ENCODE measurements at regions of chr19 and their contacts with region 1.

Region 1: DNA sequence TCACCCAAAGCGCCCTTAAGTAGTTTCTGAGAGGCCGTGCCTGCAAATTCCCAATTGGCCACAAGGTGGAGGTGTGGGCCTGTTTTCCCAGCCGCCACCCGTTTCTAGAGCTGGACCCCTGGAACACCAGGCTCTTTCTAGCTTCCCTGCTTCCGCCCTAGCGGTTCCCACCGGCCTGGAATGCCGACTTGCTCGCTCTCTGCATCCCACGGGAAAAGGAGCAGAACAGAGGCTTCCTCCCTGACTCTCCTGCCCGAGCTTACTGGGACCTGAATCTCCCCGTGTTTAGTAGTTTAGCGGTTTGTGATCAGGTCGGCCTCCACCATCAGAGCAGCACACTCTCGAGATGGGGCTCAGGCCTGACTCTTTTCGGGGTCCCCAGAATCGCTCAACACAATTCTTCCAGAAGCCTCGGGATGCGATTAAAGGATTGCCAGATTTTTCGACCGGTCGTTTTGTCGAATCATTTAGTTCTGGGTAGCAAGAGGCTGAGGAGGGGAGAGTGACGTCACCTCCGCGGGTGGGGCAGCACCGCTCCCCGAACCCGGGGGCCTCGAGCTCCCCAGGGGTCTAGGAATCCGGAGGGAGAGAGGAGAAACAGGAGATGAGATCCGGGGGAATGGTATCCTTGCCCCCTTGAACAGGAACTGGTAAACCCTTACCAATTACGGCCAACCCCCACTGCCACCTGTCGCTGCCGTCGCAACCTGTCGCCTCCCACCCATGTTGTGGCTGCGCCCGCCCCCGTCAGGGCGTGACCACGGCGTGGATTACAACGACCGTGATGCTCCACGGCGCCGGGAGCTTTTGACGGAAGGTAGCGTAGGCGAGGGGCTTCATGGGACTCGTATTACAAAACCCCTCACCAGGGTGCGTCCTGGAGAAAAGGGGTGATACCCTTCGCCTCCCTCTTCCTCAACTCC is 8.0 kb downstream of the NAPSA start:
- DNase-seq: peak; percentile 91
- H3K4me3 Mint-ChIP-seq: peak overlapping the region; percentile 82
- H3K27ac Mint-ChIP-seq: peak overlapping the region; percentile 92
- H3K4me1 Mint-ChIP-seq: peaks cover 45% of the 10 kb centered on the region
- H3K27me3 Mint-ChIP-seq: no peaks in the 10 kb centered on the region

Region 2: GRCh38 chr19:50203281-50204080 is 154.0 kb before region 1 on chr19 and contains the start of gene MYH14:
- CTCF ChIA-PET with region 1: no interaction called
- intact Hi-C with region 1: no loop called
- DNase-seq: no peak
- H3K4me3 Mint-ChIP-seq: no peak within 1 kb of the TSS
- H3K27ac Mint-ChIP-seq: no peak within 1 kb of the TSS
- H3K4me1 Mint-ChIP-seq: no peaks in the 10 kb centered on the region
- H3K27me3 Mint-ChIP-seq: peaks cover 54% of the 10 kb centered on the region
- total RNA-seq, gene MYH14: not detected

Region 3: GRCh38 chr19:50368649-50369570 is 11.5 kb after region 1 on chr19:
- CTCF ChIA-PET with region 1: interaction called, 19 read pairs
- intact Hi-C with region 1: loop called (anchors 1 kb)
- DNase-seq: peak; percentile 89
- H3K4me3 Mint-ChIP-seq: peak overlapping the region; percentile 88
- H3K27ac Mint-ChIP-seq: peak overlapping the region; percentile 88
- H3K4me1 Mint-ChIP-seq: peaks cover 35% of the 10 kb centered on the region
- H3K27me3 Mint-ChIP-seq: no peaks in the 10 kb centered on the region

Region 4: GRCh38 chr19:50401605-50402450 is 44.4 kb after region 1 on chr19:
- CTCF ChIA-PET with region 1: no interaction called
- intact Hi-C with region 1: no loop called
- DNase-seq: no peak
- H3K4me3 Mint-ChIP-seq: no peak overlapping the region
- H3K27ac Mint-ChIP-seq: no peak overlapping the region
- H3K4me1 Mint-ChIP-seq: no peaks in the 10 kb centered on the region
- H3K27me3 Mint-ChIP-seq: no peaks in the 10 kb centered on the region

Region 5: GRCh38 chr19:50414864-50415660 is 57.6 kb after region 1 on chr19:
- CTCF ChIA-PET with region 1: interaction called, 5 read pairs
- intact Hi-C with region 1: loop called (anchors 1 kb)
- DNase-seq: peak; percentile 76
- H3K4me3 Mint-ChIP-seq: no peak overlapping the region
- H3K27ac Mint-ChIP-seq: no peak overlapping the region
- H3K4me1 Mint-ChIP-seq: peaks cover 10% of the 10 kb centered on the region
- H3K27me3 Mint-ChIP-seq: peaks cover 15% of the 10 kb centered on the region

Region 6: DNA sequence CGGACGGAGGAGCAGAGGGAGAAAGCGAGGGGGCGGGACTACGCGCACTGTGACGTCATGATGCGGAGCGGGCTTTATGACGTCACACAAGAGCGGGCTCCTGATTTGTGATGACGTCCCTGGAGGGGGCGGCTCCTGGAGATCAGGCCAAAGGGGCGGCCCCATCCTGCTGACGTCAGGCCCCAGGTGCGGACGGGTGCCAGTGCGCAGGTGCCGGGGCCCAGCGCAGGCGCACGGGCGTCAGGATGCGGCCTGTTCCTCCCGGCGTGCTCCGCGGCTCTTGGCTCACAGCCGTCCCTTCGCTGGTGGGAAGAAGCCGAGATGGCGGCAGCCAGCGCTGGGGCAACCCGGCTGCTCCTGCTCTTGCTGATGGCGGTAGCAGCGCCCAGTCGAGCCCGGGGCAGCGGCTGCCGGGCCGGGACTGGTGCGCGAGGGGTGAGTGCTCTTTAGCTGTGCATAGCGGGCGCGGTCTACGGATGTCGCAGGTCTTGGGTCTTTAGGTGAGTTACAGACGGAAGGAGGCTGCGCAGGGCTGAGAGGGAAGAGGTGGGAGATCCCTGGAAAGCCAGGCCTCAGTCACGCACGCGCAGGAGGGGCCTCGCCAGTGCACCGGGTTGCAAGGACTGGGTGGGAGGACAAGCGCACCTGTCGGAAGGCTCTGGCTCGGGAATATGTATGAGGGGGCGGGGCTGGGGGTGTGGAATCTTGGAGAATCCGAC is 118.9 kb after region 1 on chr19 and contains the starts of genes EMC10 and GARIN5A:
- CTCF ChIA-PET with region 1: no interaction called
- intact Hi-C with region 1: loop called (anchors 5 kb)
- DNase-seq: peak; percentile 97
- H3K4me3 Mint-ChIP-seq: peak within 1 kb of the TSS; percentile 99
- H3K27ac Mint-ChIP-seq: peak within 1 kb of the TSS; percentile 86
- H3K4me1 Mint-ChIP-seq: peaks cover 28% of the 10 kb centered on the region
- H3K27me3 Mint-ChIP-seq: no peaks in the 10 kb centered on the region
- total RNA-seq, gene EMC10: 28.4 to 29.2 TPM
- total RNA-seq, gene GARIN5A: 0.57 TPM in 1 of 2 experiments, not detected in the other

Measured in activated naive CD4-positive, alpha-beta T cell treated with anti-CD3 and anti-CD28 coated beads for 36 hours (primary cell).